ENCODE measurements at regions of chr3 and their contacts with region 1.

Region 1: DNA sequence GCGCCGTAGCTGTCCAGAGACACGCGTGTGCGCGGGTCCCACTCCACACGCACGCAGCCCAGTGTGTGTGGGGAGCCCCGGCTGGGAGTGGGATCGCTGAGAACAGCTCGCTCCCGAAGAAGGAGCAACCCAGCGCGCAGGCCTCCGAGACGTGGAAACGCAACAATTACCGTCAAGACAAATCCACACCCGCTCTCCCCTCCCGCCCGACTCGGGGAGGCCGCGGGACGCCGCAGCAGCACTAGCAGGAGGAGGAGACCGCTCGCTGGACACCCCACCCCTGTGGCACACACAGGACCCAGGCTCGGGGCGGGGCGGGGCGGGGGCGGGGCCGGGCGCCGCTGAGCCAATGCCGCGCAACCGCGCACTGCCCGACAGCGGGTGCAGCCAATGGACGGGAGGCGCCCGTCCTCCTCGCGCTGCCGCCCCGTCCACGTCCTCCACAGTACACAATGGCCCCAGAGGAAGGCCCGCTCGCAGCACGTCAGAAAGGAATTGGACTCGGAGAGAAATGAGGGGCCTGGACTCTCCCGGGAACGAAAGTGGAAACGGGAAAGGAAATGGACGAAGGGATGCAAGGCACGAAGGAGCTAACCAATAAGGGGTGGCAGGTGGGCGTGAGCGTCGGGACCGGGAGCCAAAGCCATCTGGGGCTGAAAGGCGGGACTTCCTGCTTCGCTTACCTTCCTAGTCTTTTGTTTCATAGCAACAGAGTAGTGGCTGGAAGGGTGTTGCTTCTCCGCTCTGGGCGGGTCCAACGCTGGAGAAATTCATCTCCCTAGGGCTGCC is at the start of gene CBLB:
- DNase-seq: peak; percentile 67 to 94 (median 78)
- ATAC-seq: peak; percentile 86
- H3K4me3 ChIP-seq: peak within 1 kb of the TSS; percentile 89
- H3K4me3 Mint-ChIP-seq: peak within 1 kb of the TSS; percentile 99
- H3K27ac ChIP-seq: peak within 1 kb of the TSS; percentile 77 to 79
- H3K27ac Mint-ChIP-seq: peak within 1 kb of the TSS; percentile 89
- H3K4me1 ChIP-seq: peaks cover 10% of the 10 kb centered on the region
- H3K4me1 Mint-ChIP-seq: peaks cover 69% of the 10 kb centered on the region
- H3K27me3 ChIP-seq: no peaks in the 10 kb centered on the region
- H3K27me3 Mint-ChIP-seq: no peaks in the 10 kb centered on the region
- CTCF ChIP-seq: no peak
- total RNA-seq, gene CBLB: 112 to 124 TPM

Region 2: GRCh38 chr3:105686278-105686897 is 182.5 kb before region 1 on chr3:
- CTCF ChIA-PET with region 1: interaction called, 4 read pairs
- POLR2A ChIA-PET with region 1: interaction called, 3 read pairs
- intact Hi-C with region 1: loop called (anchors 2 to 5 kb)
- DNase-seq: peak in 3 of 14 experiments; percentile 52 to 59 (median 58)
- ATAC-seq: peak; percentile 57
- H3K4me3 ChIP-seq: no peak overlapping the region
- H3K4me3 Mint-ChIP-seq: no peak overlapping the region
- H3K27ac ChIP-seq: no peak overlapping the region
- H3K27ac Mint-ChIP-seq: peak overlapping the region; percentile 61
- H3K4me1 ChIP-seq: no peaks in the 10 kb centered on the region
- H3K4me1 Mint-ChIP-seq: peaks cover 28% of the 10 kb centered on the region
- H3K27me3 ChIP-seq: no peaks in the 10 kb centered on the region
- H3K27me3 Mint-ChIP-seq: no peaks in the 10 kb centered on the region
- CTCF ChIP-seq: peak; percentile 95

Region 3: DNA sequence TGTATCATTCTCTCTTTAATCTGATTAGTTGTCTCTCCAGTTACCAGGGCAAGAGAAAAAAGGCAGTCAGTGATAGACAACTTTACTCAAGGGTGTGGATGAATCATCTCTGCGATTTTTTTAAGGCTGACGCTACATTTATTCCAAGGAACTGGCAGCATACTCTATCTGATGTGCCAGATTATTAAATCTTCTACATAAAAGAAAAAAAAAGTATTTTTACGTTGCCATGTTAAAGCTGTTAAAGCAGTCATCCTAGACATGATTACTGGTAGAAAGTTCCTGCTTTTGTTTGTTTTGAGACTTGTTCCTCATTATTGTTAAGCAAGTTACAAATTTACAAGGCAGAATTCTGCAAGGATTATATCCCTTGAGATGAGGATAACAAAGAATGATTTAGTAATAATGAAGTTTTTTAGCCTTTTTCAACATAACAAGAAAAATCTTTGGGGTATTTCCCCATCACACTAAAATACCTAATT is 121.8 kb before region 1 on chr3:
- CTCF ChIA-PET with region 1: no interaction called
- POLR2A ChIA-PET with region 1: interaction called, 5 read pairs
- intact Hi-C with region 1: loop called (anchors 2 to 5 kb)
- DNase-seq: peak in 3 of 14 experiments; percentile 50 to 73 (median 60)
- ATAC-seq: peak; percentile 77
- H3K4me3 ChIP-seq: no peak overlapping the region
- H3K4me3 Mint-ChIP-seq: peak overlapping the region; percentile 49
- H3K27ac ChIP-seq: peak overlapping the region in 1 of 2 donors; percentile 35
- H3K27ac Mint-ChIP-seq: peak overlapping the region; percentile 94
- H3K4me1 ChIP-seq: peaks cover 26% of the 10 kb centered on the region
- H3K4me1 Mint-ChIP-seq: peaks cover 78% of the 10 kb centered on the region
- H3K27me3 ChIP-seq: no peaks in the 10 kb centered on the region
- H3K27me3 Mint-ChIP-seq: no peaks in the 10 kb centered on the region
- CTCF ChIP-seq: no peak

Region 4: GRCh38 chr3:105827959-105828358 is 41.0 kb before region 1 on chr3:
- CTCF ChIA-PET with region 1: no interaction called
- POLR2A ChIA-PET with region 1: interaction called, 5 read pairs
- intact Hi-C with region 1: loop called in 1 of 2 experiments (anchors 2 kb)
- DNase-seq: peak in 1 of 14 experiments; percentile 20
- ATAC-seq: no peak
- H3K4me3 ChIP-seq: no peak overlapping the region
- H3K4me3 Mint-ChIP-seq: no peak overlapping the region
- H3K27ac ChIP-seq: peak overlapping the region in 1 of 2 donors; percentile 2
- H3K27ac Mint-ChIP-seq: peak overlapping the region; percentile 63
- H3K4me1 ChIP-seq: peaks cover 20% of the 10 kb centered on the region
- H3K4me1 Mint-ChIP-seq: peaks cover 85% of the 10 kb centered on the region
- H3K27me3 ChIP-seq: no peaks in the 10 kb centered on the region
- H3K27me3 Mint-ChIP-seq: no peaks in the 10 kb centered on the region
- CTCF ChIP-seq: no peak

Region 5: GRCh38 chr3:105957722-105958618 is 89.0 kb after region 1 on chr3:
- CTCF ChIA-PET with region 1: no interaction called
- POLR2A ChIA-PET with region 1: no interaction called
- intact Hi-C with region 1: no loop called
- DNase-seq: no peak
- ATAC-seq: no peak
- H3K4me3 ChIP-seq: no peak overlapping the region
- H3K4me3 Mint-ChIP-seq: no peak overlapping the region
- H3K27ac ChIP-seq: no peak overlapping the region
- H3K27ac Mint-ChIP-seq: no peak overlapping the region
- H3K4me1 ChIP-seq: no peaks in the 10 kb centered on the region
- H3K4me1 Mint-ChIP-seq: no peaks in the 10 kb centered on the region
- H3K27me3 ChIP-seq: no peaks in the 10 kb centered on the region
- H3K27me3 Mint-ChIP-seq: no peaks in the 10 kb centered on the region
- CTCF ChIP-seq: no peak

Region 6: GRCh38 chr3:106058475-106058874 is 189.5 kb after region 1 on chr3:
- CTCF ChIA-PET with region 1: no interaction called
- POLR2A ChIA-PET with region 1: no interaction called
- intact Hi-C with region 1: no loop called
- DNase-seq: no peak
- ATAC-seq: no peak
- H3K4me3 ChIP-seq: no peak overlapping the region
- H3K4me3 Mint-ChIP-seq: no peak overlapping the region
- H3K27ac ChIP-seq: no peak overlapping the region
- H3K27ac Mint-ChIP-seq: no peak overlapping the region
- H3K4me1 ChIP-seq: no peaks in the 10 kb centered on the region
- H3K4me1 Mint-ChIP-seq: peaks cover 16% of the 10 kb centered on the region
- H3K27me3 ChIP-seq: no peaks in the 10 kb centered on the region
- H3K27me3 Mint-ChIP-seq: no peaks in the 10 kb centered on the region
- CTCF ChIP-seq: no peak

Region 7: DNA sequence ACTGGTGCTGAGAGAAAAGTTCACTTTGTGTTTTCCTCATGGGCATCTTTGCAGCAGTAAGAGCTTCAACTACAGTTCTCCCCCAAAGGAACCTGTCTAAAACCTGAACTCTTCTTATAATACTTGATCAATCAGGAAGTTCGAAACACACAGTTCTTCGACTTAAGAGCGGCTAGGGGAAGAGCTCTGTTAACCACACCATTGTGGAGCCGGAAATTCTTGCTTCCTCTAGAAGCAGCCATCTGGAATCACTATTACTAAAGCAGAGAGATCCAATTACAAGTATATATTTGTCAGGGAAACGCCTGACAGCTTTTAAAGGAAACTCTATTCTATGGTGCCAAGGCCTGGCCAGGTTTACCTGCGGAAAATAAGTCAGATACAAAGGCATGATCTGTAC is 337.2 kb after region 1 on chr3:
- CTCF ChIA-PET with region 1: no interaction called
- POLR2A ChIA-PET with region 1: no interaction called
- intact Hi-C with region 1: loop called in 1 of 2 experiments (anchors 10 kb)
- DNase-seq: peak in 4 of 14 experiments; percentile 26 to 68 (median 52)
- ATAC-seq: peak; percentile 80
- H3K4me3 ChIP-seq: peak overlapping the region; percentile 38
- H3K4me3 Mint-ChIP-seq: peak overlapping the region; percentile 62
- H3K27ac ChIP-seq: peak overlapping the region in 1 of 2 donors; percentile 3
- H3K27ac Mint-ChIP-seq: peak overlapping the region; percentile 69
- H3K4me1 ChIP-seq: peaks cover 7% of the 10 kb centered on the region
- H3K4me1 Mint-ChIP-seq: peaks cover 32% of the 10 kb centered on the region
- H3K27me3 ChIP-seq: no peaks in the 10 kb centered on the region
- H3K27me3 Mint-ChIP-seq: no peaks in the 10 kb centered on the region
- CTCF ChIP-seq: no peak